Heart left ventricle (tissue), 16 donors: ENCODE measurements at regions of chr2 and their contacts with region 1.

Region 1: GRCh38 chr2:96138179-96139145 is at the start of gene ASTL:
- DNase-seq: peak in 3 of 5 donors; percentile 41 to 68 (median 47)
- ATAC-seq: peak; percentile 65 to 76 (median 68)
- H3K4me3 ChIP-seq: no peak within 1 kb of the TSS
- H3K27ac ChIP-seq: no peak within 1 kb of the TSS
- H3K4me1 ChIP-seq: peaks cover 0 to 9% (median 0%) of the 10 kb centered on the region in 12 donors
- H3K27me3 ChIP-seq: peaks cover 0 to 9% (median 0%) of the 10 kb centered on the region in 9 donors
- CTCF ChIP-seq: peak; percentile 38 to 61 (median 50)
- POLR2A ChIP-seq: no peak
- total RNA-seq, gene ASTL: not detected

Region 2: DNA sequence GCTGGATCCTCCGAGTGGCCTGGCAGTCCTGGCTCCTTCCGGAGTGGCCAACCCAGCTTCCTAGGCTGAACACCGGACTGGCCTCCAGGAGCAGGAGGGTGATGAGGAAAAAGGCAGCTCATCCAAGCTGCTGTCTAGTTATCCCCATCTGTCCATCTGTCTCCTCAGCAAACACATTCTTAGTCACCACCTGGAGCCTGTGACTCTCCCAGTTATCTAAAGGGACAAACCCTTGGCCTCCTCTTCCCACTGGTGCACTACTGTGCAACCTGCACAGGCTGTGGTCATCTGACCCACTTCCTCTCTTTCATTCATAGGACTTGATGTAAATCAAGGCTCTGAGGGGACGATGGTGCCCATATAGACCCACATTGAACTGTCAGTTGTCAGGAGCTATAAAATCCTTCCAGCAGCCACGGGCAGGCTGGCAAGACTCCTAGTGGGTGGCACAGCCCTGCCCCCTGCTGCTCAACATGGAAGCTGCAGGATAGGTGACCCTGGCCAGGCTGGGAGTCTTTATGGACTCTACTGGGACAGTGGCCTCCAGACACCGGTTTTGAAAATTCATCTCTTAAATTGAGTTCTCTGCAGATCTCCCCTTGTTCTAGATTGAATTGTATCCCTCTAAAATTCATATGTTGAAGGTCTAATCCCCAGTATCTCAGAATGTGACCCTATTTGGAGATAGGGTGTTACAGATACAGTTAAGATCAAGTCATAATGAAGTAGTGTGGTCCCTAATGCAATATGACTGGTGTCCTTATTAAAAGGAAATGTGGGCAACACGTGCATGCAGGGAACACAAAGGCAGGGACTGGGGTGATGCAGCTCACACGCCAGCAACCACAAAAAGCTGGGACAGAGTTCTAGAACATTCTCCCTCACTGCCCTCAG is 36.0 kb after region 1 on chr2:
- intact Hi-C with region 1: loop called in 8 of 10 experiments (anchors 2 to 5 kb)
- DNase-seq: peak; percentile 68 to 82 (median 78)
- ATAC-seq: peak; percentile 59 to 82 (median 76)
- H3K4me3 ChIP-seq: no peak overlapping the region
- H3K27ac ChIP-seq: no peak overlapping the region
- H3K4me1 ChIP-seq: peaks cover 0 to 16% (median 5%) of the 10 kb centered on the region in 12 donors
- H3K27me3 ChIP-seq: no peaks in the 10 kb centered on the region
- CTCF ChIP-seq: peak; percentile 85 to 96 (median 90)
- POLR2A ChIP-seq: no peak

Region 3: GRCh38 chr2:96195410-96196066 is 57.1 kb after region 1 on chr2:
- intact Hi-C with region 1: no loop called
- DNase-seq: no peak
- ATAC-seq: no peak
- H3K4me3 ChIP-seq: no peak overlapping the region
- H3K27ac ChIP-seq: peak overlapping the region in 6 of 12 donors; percentile 1 to 91 (median 30)
- H3K4me1 ChIP-seq: peaks cover 5 to 79% (median 42%) of the 10 kb centered on the region in 12 donors
- H3K27me3 ChIP-seq: no peaks in the 10 kb centered on the region
- CTCF ChIP-seq: no peak
- POLR2A ChIP-seq: no peak

Region 4: DNA sequence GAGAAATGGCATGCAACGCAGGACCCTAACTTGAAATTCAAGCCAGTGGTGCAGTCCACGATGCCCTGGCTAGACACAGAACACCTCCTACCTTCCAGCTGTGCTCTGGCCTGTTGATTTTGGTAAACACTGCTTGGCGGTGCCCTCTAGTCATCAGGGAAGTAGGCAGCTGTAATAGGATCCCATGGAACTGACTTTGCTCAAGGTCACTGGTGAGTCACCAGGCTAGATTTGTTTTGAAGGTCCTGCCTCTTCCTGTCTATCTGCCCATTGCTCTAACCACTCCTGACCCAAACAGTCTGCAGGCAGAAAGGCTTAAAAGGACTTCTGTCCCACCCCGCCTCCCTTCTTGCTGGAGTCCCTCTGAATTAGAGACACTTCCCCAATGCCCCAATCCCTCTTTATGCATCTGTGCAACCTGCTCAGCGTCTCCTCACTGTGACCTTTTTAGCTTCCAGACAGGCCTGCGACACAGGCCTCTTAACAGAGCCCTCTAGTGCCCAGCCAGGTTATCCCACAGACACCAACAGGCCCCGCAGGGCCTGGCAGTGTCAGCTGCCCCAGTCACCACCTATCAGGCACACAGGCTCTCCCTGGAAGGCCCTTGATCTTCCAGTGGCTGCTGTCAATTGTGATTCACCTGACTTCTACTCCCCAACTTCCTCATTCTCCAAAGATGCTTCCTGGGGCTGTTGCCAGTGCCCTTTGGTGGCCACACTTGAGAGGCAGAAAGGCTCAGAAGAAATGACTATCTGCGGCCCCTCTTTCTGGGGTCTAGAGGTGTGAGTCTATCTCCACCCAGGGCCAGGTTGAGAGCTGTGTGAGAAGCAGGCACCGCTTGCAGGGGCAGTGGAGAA is 122.2 kb after region 1 on chr2:
- intact Hi-C with region 1: loop called in 7 of 10 experiments (anchors 2 to 10 kb)
- DNase-seq: peak in 4 of 5 donors; percentile 64 to 87 (median 79)
- ATAC-seq: peak; percentile 75 to 85 (median 82)
- H3K4me3 ChIP-seq: peak overlapping the region in 10 of 12 donors; percentile 3 to 30 (median 16)
- H3K27ac ChIP-seq: peak overlapping the region; percentile 62 to 96 (median 92)
- H3K4me1 ChIP-seq: peaks cover 47 to 94% (median 88%) of the 10 kb centered on the region in 12 donors
- H3K27me3 ChIP-seq: no peaks in the 10 kb centered on the region
- CTCF ChIP-seq: peak; percentile 15 to 68 (median 41)
- POLR2A ChIP-seq: peak in 1 of 2 donors; percentile 54

Region 5: DNA sequence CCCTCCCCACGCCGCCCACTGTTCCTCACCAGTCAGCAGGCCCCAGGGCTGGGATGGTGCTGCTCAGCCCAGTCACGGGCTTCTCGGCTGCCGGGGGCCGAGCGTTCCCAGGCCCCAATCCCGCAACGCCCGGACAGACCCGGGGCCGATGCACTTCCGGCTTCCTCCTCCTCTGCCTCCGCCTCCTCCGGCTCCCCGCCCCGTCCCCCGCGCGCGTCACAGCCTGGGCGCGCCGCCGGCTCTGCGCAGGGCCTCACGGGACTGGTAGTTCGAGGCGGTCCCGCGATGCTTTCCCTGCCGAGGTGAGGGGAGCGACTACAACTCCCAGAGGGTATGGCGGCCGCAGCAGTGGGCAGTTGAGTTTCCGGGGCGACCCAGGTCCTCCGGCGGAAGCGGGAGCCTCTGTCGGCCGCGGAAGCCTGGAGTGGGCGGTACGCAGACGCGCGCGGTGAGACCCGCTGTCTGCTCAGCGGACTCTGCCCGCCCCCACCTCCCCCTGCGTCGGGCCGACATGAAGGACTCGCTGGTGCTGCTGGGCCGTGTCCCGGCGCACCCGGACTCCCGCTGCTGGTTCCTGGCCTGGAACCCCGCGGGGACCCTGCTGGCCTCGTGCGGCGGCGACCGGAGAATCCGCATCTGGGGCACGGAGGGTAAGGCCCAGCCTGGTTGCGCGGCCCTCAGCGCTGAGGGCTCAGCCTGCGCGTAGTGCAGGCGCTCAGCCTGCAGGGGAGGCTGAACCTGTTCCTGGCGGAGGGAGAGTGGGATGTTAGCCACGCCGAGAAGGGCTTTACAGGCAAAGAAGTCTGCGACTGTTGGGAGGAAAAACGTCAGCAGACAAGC is 127.6 kb after region 1 on chr2 and contains the starts of genes CIAO1 and TMEM127:
- intact Hi-C with region 1: loop called in 7 of 10 experiments (anchors 2 to 10 kb)
- DNase-seq: peak; percentile 99 to 100 (median 99)
- ATAC-seq: peak; percentile 95 to 97 (median 96)
- H3K4me3 ChIP-seq: peak within 1 kb of the TSS; percentile 72 to 100 (median 90)
- H3K27ac ChIP-seq: peak within 1 kb of the TSS; percentile 86 to 98 (median 95)
- H3K4me1 ChIP-seq: peaks cover 16 to 55% (median 49%) of the 10 kb centered on the region in 12 donors
- H3K27me3 ChIP-seq: no peaks in the 10 kb centered on the region
- CTCF ChIP-seq: peak in 7 of 12 donors; percentile 7 to 30 (median 20)
- POLR2A ChIP-seq: peak; percentile 91 to 97
- total RNA-seq, gene CIAO1: 57.7 to 109 (median 68.7) TPM
- total RNA-seq, gene TMEM127: 71.8 to 134 (median 103) TPM

Region 6: DNA sequence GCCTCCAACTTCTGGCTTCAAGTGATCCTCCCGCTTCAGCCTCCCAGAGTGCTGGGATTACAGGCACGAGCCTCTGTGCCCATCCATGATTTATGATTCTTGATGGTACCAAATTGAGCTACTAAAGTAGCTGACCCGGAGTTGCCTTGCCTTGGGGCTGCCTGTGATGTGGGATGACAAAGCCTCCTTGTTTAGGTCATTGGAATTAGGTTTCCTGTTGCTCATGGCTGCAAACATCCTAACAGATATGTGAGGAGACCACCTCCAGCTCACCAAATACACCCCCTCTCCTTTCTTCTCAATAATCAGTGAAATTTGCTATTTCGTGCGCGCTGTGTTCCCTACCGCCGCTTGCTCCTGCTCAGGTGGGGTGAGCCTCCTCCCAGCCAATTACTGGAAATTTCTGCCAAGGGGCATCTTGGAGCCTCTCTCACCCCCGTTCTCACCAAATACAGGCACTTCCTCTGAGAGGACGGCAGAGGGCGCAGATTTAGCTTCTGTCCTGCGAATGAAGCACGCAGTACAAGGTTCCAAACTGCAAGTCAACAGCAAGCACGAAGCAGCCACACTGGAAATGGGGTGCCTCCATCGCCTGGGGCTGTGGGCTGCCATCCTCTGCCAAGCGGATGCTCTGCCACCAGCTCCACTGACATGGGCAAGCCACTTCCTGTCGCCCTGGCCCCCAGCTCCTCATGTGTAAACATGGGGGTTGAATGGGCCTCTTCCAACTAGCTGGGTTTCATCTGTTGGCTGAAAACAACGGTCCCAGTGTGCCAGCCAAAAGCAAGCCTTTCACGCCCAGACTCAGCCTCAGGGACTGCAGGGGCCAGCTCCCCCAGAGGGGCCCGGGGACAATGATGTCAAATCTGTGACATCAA is 268.8 kb after region 1 on chr2:
- intact Hi-C with region 1: loop called in 2 of 10 experiments (anchors 5 to 10 kb)
- DNase-seq: peak; percentile 62 to 73 (median 65)
- ATAC-seq: peak; percentile 42 to 68 (median 54)
- H3K4me3 ChIP-seq: no peak overlapping the region
- H3K27ac ChIP-seq: peak overlapping the region in 7 of 12 donors; percentile 1 to 77 (median 68)
- H3K4me1 ChIP-seq: peaks cover 0 to 38% (median 23%) of the 10 kb centered on the region in 12 donors
- H3K27me3 ChIP-seq: no peaks in the 10 kb centered on the region
- CTCF ChIP-seq: peak; percentile 71 to 89 (median 81)
- POLR2A ChIP-seq: no peak